CD8-positive, alpha-beta memory T cell (primary cell): ENCODE measurements at regions of chr4 and their contacts with region 1.

Region 1: GRCh38 chr4:38675146-38676121 is 11.4 kb downstream of the KLF3 start:
- DNase-seq: peak; percentile 70 to 85 (median 75)
- H3K4me3 ChIP-seq: peak overlapping the region; percentile 26
- H3K4me3 Mint-ChIP-seq: peak overlapping the region; percentile 15 to 88 (median 71)
- H3K27ac ChIP-seq: no peak overlapping the region
- H3K27ac Mint-ChIP-seq: peak overlapping the region; percentile 65 to 95 (median 91)
- H3K4me1 ChIP-seq: peaks cover 88% of the 10 kb centered on the region
- H3K4me1 Mint-ChIP-seq: peaks cover 87 to 95% (median 92%) of the 10 kb centered on the region in 3 donors
- H3K27me3 ChIP-seq: no peaks in the 10 kb centered on the region
- H3K27me3 Mint-ChIP-seq: peaks cover 0 to 4% of the 10 kb centered on the region in 2 donors

Region 2: DNA sequence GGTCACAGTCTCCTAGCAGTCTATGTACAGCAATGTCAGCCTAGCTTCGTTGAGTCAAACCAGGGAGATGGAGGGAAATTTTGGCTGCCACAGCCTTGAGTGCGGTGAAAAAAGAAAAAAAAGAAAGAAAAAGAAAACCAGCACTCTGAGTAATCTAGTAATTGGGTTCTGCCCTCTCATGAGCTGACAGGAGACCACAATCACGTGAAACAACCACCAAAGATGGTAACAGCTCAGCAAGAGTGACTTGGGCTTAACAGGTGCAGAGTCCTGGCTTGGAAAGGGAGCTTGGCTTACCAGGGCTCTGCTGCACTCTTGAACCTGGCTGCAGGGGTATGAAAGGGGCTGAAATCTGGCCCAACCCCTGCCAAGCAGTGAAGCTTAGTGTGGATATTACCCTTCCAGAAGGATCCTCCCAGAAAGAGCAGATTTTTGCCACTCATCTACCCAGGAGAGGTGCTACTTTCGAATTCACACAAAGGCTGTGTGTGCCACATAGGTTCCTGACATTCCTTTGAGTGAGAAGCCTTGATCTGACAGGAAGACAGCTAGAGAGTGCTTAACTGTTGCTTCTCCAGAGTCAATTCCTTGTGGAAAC is 364.9 kb before region 1 on chr4:
- CTCF ChIA-PET with region 1: interaction called, 17 read pairs
- POLR2A ChIA-PET with region 1: no interaction called
- DNase-seq: peak; percentile 51 to 87 (median 84)
- H3K4me3 ChIP-seq: peak overlapping the region; percentile 26
- H3K4me3 Mint-ChIP-seq: peak overlapping the region; percentile 54 to 82 (median 77)
- H3K27ac ChIP-seq: no peak overlapping the region
- H3K27ac Mint-ChIP-seq: peak overlapping the region; percentile 80 to 95 (median 90)
- H3K4me1 ChIP-seq: peaks cover 47% of the 10 kb centered on the region
- H3K4me1 Mint-ChIP-seq: peaks cover 52 to 75% (median 67%) of the 10 kb centered on the region in 3 donors
- H3K27me3 ChIP-seq: no peaks in the 10 kb centered on the region
- H3K27me3 Mint-ChIP-seq: no peaks in the 10 kb centered on the region

Region 3: DNA sequence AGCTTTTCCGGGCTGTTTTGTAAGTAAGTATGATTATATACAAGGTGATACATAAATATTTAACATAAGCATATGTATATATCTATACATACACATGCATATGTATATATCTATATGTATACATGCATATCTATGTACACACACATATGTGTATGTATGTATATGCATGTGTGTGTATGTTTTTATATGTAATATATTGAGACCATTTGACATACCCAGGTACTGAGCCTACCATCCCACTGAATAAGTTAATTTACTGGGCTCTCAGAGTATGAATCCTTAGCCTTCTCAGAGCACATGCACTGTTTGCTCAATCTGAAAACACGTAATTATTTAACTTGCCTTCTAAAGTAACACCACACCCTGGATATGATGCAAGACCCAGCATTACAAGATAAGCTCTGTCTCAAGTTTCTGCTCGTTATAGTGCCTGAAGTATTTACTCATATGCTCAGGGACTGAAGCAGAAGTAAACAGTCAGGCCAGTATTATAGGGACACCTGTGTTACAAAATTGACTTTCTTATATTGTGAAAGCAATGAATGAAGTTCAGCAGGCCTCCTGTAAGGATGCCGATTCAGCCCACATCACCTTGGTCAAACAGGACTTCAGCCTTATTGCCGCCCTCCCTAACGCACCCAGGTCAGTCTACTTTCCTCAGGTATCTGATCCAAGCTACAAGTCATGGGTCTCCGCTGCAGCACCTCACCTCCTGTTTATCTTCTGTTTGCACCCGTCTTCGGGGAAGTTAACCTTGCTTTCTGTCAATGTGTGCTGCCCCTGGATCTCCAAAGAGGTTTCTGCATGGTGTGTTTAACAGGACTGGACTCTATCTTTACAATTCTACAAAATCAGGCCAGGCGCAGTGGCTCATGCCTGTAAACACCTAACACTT is 54.4 kb before region 1 on chr4:
- CTCF ChIA-PET with region 1: no interaction called
- POLR2A ChIA-PET with region 1: no interaction called
- DNase-seq: no peak
- H3K4me3 ChIP-seq: no peak overlapping the region
- H3K4me3 Mint-ChIP-seq: no peak overlapping the region
- H3K27ac ChIP-seq: peak overlapping the region; percentile 28
- H3K27ac Mint-ChIP-seq: peak overlapping the region in 1 of 8 donors; percentile 12
- H3K4me1 ChIP-seq: peaks cover 7% of the 10 kb centered on the region
- H3K4me1 Mint-ChIP-seq: peaks cover 0 to 7% (median 6%) of the 10 kb centered on the region in 3 donors
- H3K27me3 ChIP-seq: no peaks in the 10 kb centered on the region
- H3K27me3 Mint-ChIP-seq: no peaks in the 10 kb centered on the region

Region 4: DNA sequence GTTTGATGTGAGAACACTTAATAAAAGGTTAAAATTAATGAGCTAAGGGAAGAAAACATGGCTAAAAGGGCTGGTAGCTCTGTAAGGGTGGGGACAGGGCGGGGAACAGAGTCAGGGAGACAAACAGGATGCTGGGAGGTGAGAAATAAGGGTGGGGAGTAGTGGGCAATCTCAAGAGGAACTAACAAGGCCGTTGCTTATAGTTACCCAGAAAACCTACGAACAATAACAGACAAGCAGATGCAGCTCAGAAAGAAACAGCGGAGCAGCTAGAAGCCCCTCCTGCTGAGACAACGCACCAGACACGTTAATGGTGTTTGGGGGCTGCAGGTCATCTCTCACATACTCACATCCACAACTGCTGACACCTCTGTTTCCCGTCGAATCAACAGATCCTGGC is 21.2 kb before region 1 on chr4:
- CTCF ChIA-PET with region 1: interaction called, 17 read pairs
- POLR2A ChIA-PET with region 1: interaction called, 3 read pairs
- DNase-seq: peak; percentile 16 to 86 (median 79)
- H3K4me3 ChIP-seq: peak overlapping the region; percentile 63
- H3K4me3 Mint-ChIP-seq: peak overlapping the region; percentile 76 to 93 (median 81)
- H3K27ac ChIP-seq: peak overlapping the region; percentile 97
- H3K27ac Mint-ChIP-seq: peak overlapping the region; percentile 99 to 100 (median 100)
- H3K4me1 ChIP-seq: peaks cover 55% of the 10 kb centered on the region
- H3K4me1 Mint-ChIP-seq: peaks cover 53 to 68% (median 61%) of the 10 kb centered on the region in 3 donors
- H3K27me3 ChIP-seq: no peaks in the 10 kb centered on the region
- H3K27me3 Mint-ChIP-seq: peaks cover 0 to 2% of the 10 kb centered on the region in 2 donors

Region 5: DNA sequence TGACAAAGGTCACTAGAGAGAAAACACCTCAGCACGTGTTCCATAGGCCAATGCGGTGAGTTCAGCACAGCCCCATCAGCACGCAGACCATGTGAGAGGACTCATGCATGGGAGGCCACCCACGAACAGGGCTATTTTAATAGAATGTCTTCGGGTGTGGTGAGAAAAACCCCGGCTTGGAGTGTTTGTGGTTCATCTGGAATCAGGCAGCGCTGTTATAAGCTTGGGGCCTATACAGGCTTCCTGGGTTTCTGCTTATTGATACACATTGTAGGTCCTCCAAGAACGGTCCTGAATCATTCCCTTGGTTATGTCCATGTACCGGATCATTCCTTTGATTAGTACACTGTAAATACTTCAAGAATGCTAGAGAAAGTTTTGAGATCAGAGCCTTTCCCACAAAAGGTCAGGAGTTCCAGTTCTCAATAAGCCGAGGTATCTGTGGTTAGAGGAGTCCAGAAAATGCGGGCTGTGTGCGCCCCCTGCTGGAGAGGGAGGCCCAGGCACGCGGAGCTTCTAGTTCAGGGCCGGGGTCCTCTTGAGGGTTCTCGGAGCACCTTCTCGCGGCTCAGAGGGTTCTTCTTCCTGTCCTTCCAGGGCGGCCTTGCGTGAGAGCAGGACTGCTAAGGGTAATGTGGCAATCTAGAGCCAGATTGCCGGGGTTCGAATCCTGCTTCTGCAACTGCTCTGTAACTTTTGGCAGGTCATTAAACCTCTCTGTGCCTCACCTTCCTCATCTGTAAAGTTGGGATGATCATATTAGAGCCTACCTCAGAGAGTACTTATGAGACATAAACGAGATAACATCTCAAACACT is 55.6 kb after region 1 on chr4:
- CTCF ChIA-PET with region 1: interaction called, 10 read pairs
- POLR2A ChIA-PET with region 1: no interaction called
- DNase-seq: peak; percentile 70 to 87 (median 71)
- H3K4me3 ChIP-seq: no peak overlapping the region
- H3K4me3 Mint-ChIP-seq: peak overlapping the region in 5 of 7 donors; percentile 19 to 52 (median 46)
- H3K27ac ChIP-seq: no peak overlapping the region
- H3K27ac Mint-ChIP-seq: peak overlapping the region in 1 of 8 donors; percentile 65
- H3K4me1 ChIP-seq: peaks cover 10% of the 10 kb centered on the region
- H3K4me1 Mint-ChIP-seq: peaks cover 10 to 22% (median 19%) of the 10 kb centered on the region in 3 donors
- H3K27me3 ChIP-seq: no peaks in the 10 kb centered on the region
- H3K27me3 Mint-ChIP-seq: peaks cover 0 to 1% of the 10 kb centered on the region in 2 donors